Breast epithelium (tissue), 4 donors: ENCODE measurements at regions of chr13 and their contacts with region 1.

Region 1: DNA sequence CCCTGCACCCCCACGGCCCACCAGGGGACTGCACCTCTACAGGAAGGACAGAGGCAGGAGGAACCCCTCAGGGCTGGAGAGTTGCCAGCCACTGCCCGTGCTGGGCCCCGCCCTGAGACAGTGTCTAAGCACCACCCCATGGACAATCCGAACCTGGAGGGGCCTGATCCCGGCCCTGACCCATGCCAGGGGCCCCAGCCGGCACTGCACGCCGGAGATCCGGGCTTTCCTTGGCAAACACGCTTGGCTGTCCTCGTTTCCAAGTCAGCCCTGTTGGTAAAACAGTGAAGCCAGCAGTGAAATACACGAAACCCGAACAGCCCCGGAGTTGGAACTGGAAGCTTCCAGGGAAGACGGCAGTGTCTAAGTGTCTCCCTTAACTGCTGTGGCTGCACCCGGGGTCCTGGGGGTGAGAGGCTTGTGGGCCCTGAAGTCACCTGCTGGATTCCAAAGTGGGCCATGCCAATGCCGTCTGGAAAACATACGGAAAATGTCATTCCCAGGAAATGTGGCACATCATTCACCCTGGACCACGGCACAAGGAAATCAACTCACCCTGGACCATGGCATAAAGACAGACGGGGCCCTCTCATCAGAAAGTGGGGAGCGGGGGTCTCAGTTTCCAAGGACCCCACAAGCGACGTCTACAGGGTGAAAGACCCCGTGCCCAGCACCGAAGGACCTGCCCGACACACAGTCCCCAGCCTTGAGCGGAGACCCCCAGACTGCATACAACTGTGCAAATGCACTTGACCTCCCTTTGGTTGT is 30.9 kb downstream of the RASA3 start:
- DNase-seq: peak in 1 of 2 donors; percentile 52
- H3K4me3 ChIP-seq: no peak overlapping the region
- H3K27ac ChIP-seq: peak overlapping the region; percentile 40 to 61
- H3K4me1 ChIP-seq: no peaks in the 10 kb centered on the region
- H3K27me3 ChIP-seq: no peaks in the 10 kb centered on the region
- CTCF ChIP-seq: no peak
- POLR2A ChIP-seq: no peak

Region 2: DNA sequence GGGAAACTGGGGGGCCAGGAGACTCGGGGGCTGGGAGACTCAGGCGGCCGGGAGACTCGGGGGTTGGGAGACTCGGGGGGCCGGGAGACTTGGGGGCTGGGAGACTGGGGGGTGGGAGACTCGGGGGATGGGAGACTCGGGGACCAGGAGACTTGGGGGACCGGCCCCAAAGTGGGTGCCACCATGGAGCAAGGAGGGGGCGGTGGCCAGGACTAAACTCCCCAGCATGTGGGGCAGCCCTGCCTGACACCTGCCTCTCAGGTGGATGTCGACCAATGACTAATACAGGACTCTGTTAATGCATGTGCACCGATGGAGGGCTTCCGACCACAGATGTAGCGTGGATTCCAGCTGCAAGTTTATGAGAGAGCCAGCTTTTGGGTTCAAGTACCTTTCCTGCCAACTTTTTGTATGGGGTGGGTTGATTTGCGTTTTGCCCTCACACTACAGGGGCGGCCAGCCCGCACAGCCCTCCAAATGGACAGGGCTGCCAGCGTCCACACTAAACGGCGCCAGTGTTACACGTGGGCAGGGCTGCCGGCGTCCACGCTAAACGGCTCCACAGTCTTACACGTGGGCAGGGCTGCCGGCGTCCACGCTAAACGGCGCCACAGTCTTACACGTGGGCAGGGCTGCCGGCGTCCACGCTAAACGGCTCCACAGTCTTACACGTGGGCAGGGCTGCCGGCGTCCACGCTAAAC is 31.3 kb before region 1 on chr13:
- intact Hi-C with region 1: loop called (anchors 1 kb)
- DNase-seq: peak in 1 of 2 donors; percentile 45
- H3K4me3 ChIP-seq: no peak overlapping the region
- H3K27ac ChIP-seq: no peak overlapping the region
- H3K4me1 ChIP-seq: peaks cover 11 to 16% of the 10 kb centered on the region in 2 donors
- H3K27me3 ChIP-seq: no peaks in the 10 kb centered on the region
- CTCF ChIP-seq: no peak
- POLR2A ChIP-seq: no peak

Region 3: DNA sequence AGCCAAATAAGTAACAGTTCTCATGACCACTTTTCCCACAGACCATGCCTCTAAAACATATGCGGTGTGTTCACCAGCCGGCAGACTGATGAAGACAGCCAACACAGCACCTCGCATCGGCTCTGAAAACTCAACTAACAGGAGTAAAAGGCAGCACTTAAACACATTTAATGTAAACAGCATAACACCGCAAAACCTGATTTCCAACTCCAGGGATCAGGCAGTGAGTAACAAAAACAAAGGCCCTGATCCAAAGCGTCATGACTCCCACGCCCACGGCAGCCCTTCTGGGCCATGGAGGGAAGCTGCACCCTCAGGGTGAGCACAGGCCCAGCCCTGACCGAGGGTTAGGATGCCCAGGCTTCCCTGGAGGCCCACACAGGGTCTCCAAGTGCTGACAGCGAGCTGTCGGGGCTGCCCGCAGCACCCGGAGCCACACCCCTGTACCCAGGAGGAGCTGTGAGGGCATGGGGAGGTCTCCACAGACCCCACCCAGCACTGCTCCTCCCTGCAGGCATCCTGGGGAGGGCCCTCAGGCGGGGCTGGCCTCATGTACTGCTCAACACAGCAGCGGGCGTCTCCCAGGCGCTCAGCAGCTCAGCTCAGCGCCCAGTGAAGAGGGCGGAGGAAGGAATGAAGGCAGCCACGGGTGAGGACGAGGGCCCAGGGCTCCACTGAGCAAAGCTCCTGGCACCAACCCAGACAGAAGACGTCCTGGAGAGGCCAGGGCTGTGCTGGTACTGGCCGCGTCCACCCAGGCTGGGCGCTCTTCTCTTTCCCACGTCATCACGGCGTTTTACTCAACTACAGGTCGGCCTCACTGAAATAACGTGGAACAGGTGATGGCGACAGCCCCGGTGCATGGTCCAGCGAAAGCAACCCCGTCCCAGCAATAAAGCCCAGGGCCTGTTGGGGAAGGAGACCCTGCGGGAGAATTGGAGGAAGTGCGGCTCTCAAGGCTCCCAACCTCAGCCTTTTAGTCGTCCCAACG is 22.8 kb before region 1 on chr13:
- intact Hi-C with region 1: loop called (anchors 1 kb)
- DNase-seq: peak in 1 of 2 donors; percentile 49
- H3K4me3 ChIP-seq: peak overlapping the region in 1 of 3 donors; percentile 18
- H3K27ac ChIP-seq: peak overlapping the region; percentile 70 to 80
- H3K4me1 ChIP-seq: peaks cover 7 to 8% of the 10 kb centered on the region in 2 donors
- H3K27me3 ChIP-seq: no peaks in the 10 kb centered on the region
- CTCF ChIP-seq: no peak
- POLR2A ChIP-seq: no peak

Region 4: DNA sequence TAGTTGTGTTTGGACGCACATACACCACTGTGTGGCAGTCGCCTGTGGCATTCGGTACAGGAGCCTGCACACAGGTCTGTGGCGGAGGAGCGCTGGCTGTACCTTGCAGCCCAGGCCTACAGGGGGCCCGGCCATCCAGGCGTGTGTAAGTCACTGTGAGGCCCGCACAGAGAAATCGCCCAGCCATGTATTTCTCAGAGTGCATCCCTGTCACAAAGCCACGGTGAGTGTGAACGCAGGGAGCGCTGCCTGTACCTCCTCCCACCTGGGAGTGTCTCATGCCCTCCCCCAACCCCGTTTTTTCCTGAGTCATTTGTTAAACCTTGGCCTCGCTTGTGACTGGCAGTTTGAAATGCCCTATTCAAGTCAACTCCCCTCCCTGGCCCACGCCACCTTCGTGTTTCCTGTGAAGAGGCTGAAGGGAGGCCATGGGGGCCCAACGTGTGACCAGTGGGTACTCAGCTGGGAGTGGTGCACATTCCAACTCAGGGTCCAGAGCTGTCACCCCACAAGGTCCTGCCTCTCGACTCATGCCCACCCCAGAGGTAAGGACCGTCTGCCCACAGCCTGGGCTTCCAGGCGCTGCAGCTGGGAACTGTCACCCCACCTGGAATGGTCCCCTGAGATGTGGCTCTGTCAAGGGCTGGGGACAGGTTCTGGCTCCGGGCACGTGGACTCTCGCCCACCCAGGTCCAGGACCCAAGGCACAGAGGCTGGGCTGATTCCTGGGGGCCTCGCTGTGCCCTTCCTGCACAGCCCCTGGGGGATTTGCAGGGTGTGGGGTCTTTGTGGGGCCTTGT is 42.5 kb after region 1 on chr13:
- intact Hi-C with region 1: no loop called
- DNase-seq: peak in 1 of 2 donors; percentile 47
- H3K4me3 ChIP-seq: no peak overlapping the region
- H3K27ac ChIP-seq: no peak overlapping the region
- H3K4me1 ChIP-seq: no peaks in the 10 kb centered on the region
- H3K27me3 ChIP-seq: no peaks in the 10 kb centered on the region
- CTCF ChIP-seq: no peak
- POLR2A ChIP-seq: no peak